ENCODE measurements at regions of chr22 and their contacts with region 1.

Region 1: DNA sequence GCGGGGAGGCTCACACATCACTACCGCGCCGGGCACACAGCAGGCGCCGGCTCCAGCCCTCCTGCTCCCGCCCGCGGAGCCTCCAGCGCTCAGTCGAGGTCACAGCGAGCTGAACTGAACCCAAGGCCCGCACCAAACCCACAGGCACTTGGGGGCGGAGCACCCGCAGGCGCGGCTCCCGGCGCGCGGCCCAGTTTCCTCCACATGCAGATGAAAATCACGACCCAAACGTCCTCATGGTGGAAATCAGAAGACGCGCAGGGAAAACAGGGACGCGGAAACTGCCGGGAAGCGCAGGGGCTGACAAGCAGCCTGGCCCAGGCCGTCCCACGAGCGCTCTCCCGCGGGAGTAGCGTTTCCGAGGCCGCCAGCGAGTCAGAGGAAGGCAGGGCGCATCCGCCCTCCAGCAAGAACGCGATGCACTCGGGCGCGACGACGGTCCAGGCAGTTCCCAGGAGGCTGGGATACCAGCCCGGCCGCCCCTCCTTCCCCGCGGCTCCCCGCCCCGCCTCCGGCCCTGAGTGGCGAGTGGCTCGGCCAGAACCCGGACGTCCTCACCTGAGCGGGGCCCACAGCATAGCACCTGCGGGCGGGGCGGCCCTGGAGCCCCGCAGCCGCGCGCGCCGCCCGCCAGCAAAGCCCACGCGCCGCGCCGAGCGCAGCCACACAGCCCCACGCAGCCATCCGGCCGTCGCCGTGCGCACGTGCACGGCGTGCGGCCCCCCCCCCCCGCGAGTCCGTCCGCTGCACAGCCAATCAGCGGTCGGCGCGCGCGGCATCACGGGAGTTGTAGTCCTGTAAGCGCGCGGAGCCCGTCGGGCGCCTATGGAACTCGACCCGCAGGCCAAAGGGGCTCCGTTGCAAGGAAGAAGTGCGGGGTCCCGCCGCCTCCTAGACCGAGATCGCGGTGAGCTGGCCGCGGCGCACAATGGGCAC is at the start of gene HDHD5:
- DNase-seq: peak; percentile 91
- H3K4me3 ChIP-seq: peak within 1 kb of the TSS; percentile 83
- H3K27ac ChIP-seq: peak within 1 kb of the TSS; percentile 47
- H3K4me1 ChIP-seq: peaks cover 26% of the 10 kb centered on the region
- CTCF ChIP-seq: no peak
- total RNA-seq, gene HDHD5: 77.3 and 84.6 TPM in 2 replicates

Region 2: GRCh38 chr22:17084554-17085276 is 74.1 kb before region 1 on chr22 and contains the start of gene IL17RA:
- CTCF ChIA-PET with region 1: no interaction called
- POLR2A ChIA-PET with region 1: interaction called, 3 read pairs
- intact Hi-C with region 1: loop called (anchors 2 kb)
- DNase-seq: peak; percentile 92
- H3K4me3 ChIP-seq: peak within 1 kb of the TSS; percentile 92
- H3K27ac ChIP-seq: peak within 1 kb of the TSS; percentile 19
- H3K4me1 ChIP-seq: peaks cover 50% of the 10 kb centered on the region
- CTCF ChIP-seq: no peak
- total RNA-seq, gene IL17RA: 5.5 and 7.8 TPM in 2 replicates

Region 3: DNA sequence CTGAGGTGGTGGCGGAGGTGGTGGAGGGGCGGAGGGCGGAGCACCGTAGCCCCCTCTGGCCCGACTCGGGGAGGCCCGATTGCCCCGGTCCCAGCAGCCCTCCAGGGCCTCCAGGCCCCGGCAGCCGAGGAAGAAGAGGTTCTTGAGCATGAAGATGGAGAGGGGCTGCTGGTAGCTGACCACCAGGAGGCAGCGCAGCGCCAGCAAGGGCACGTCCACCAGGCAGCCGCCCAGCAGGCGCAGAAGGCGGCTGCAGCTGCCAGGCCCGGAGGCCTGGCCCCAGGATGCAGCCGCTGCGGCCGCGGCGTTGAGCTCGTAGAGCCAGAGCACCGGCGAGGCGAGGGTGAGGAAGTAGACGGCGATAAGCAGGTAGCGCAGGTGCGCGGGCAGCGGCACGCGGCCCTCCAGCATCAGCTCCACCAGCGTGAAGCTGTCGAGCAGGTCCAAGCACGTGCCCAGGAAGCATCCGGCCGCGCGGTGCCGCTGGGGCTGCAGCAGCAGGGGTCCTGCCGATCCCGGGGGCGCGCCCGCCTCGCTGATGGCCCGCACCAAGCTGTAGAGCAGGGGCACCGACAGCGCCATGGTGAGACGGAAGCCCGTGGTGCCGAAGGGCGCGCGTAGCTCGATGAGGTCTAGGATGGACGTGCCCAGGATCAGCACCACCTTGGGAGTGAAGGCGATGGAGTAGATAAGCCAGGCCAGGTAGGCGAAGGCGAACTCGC is 39.2 kb before region 1 on chr22:
- CTCF ChIA-PET with region 1: no interaction called
- POLR2A ChIA-PET with region 1: no interaction called
- intact Hi-C with region 1: loop called (anchors 5 kb)
- DNase-seq: no peak
- H3K4me3 ChIP-seq: no peak overlapping the region
- H3K27ac ChIP-seq: no peak overlapping the region
- H3K4me1 ChIP-seq: peaks cover 34% of the 10 kb centered on the region
- CTCF ChIP-seq: peak; percentile 57

Measured in OCI-LY7 (cell line).